Posterior vena cava (tissue), 2 donors: ENCODE measurements at regions of chr4 and their contacts with region 1.

Region 1: DNA sequence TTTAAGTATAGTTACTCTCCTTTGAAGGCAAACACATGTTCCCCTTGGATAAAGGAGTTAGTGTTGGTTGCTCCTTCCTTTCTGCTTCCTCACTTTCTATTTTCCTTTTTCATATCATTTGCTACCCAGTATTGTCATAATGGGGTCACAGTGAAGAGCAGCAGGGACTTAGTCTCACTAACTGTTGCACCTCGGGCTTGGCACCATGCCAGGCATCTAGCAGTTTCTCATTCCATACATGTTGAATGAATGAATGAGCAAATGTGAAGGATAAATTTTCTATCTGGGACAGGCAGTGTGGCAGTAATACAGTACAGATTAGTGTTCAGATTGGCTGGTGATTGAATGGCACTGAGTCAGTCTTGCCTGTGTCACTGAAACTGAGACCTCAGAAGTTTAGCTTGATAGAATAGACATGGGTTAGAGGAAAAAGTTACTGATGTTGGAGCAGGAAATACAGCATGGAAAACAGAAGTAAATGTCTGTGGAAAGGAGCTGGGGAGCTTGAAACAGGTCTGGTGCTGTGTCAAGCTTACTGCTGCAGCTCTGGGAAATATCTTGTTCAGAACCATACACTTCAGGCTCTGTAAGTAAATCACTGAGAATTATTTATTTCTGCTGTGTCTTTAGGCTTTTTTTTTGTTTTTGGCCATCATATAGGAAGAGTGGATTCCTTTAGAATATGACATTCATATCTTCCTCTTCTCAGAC is 55.8 kb upstream of the PITX2 start:
- DNase-seq: no peak

Region 2: GRCh38 chr4:110710070-110710469 is 31.4 kb after region 1 on chr4:
- intact Hi-C with region 1: loop called in 1 of 2 experiments (anchors 1 kb)
- DNase-seq: no peak

Region 3: DNA sequence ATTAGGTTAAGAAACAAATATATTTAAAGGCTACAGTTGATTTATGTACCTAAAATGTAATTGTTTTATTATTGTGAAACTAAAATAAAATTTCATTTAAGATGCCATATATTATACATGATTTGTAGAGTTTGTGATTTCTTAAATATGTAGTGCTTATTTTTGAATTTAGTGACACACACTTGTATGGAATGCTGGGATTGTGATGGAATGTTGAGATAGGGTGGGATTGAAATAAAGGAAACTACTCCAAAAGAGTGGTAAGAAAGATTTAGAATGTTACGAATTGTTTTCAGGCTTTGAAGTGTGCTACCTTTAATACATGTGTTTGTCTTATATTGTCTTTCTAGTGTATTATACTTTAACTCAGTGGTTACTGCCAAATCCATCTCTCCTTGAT is 274.5 kb after region 1 on chr4:
- intact Hi-C with region 1: no loop called
- DNase-seq: no peak